CD4-positive, alpha-beta T cell (primary cell): ENCODE measurements at regions of chr3 and their contacts with region 1.

Region 1: DNA sequence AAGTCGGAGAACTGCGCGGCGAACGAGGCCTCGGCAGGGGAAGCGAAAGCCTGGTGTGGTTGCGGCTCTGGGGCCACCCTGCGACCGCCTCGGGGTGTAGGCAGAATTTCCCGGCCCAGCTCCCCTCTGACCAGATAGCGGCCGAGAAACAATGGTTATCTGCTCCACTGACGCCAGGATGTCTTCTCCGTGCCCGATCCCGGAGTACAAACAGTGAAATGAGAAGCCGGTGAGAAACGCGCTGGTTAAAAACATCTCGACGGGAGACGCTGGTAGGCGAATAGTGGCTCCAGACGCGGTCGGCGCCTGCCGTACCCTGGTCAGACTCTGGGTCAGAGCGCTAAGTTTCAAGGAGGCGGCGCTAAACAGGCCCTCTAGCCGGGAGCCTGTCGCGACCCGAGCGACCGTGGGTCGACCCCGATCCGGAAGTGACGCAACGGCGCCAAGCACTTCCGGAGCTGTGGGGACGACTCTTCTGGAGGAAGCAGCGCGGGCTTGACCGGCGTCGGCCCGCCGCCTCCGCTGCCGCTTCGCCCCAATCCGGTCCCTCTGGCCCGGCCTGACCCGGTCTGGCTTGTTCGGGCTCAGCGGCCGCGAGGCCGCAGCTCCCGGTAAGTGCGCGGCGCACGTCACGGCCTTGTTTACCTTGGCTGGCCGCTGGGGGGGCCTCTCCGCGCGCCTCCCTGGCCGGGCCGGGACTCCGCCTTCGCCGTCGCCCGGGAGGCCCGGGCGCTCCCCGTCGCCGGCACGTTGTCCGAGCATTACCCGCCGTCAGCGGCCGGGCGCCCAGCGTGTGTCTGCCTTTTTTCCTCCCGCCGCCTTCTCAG is at the start of gene ARIH2:
- DNase-seq: peak; percentile 74 to 95 (median 82)
- ATAC-seq: peak; percentile 73
- H3K4me3 ChIP-seq: peak within 1 kb of the TSS; percentile 99
- H3K4me3 Mint-ChIP-seq: peak within 1 kb of the TSS; percentile 94
- H3K27ac ChIP-seq: peak within 1 kb of the TSS; percentile 98 to 99
- H3K27ac Mint-ChIP-seq: peak within 1 kb of the TSS; percentile 99
- H3K4me1 ChIP-seq: peaks cover 37% of the 10 kb centered on the region
- H3K4me1 Mint-ChIP-seq: peaks cover 26% of the 10 kb centered on the region
- H3K27me3 ChIP-seq: no peaks in the 10 kb centered on the region
- H3K27me3 Mint-ChIP-seq: no peaks in the 10 kb centered on the region
- CTCF ChIP-seq: no peak
- total RNA-seq, gene ARIH2: 182 TPM

Region 2: DNA sequence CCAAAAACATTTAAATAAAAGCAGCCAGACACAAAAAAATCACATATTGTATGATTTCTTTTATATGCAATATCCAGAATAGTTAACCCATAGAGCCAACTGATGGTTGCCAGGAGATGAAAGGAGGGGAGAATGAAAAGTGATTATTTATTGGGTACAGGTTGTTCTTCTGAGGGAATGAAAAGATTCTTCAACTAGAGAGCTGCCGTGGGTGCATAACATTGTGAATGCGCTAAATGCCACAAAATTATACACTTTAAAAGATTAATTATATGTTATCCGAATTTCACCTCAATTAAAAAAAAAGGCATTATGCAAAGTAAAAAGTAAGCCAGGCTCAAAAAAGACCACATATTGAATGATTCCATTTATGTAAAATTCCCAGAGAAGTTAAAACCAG is 107.1 kb before region 1 on chr3:
- CTCF ChIA-PET with region 1: no interaction called
- POLR2A ChIA-PET with region 1: interaction called, 11 read pairs
- intact Hi-C with region 1: no loop called
- DNase-seq: no peak
- ATAC-seq: no peak
- H3K4me3 ChIP-seq: no peak overlapping the region
- H3K4me3 Mint-ChIP-seq: peak overlapping the region; percentile 9
- H3K27ac ChIP-seq: no peak overlapping the region
- H3K27ac Mint-ChIP-seq: peak overlapping the region; percentile 65
- H3K4me1 ChIP-seq: peaks cover 32% of the 10 kb centered on the region
- H3K4me1 Mint-ChIP-seq: peaks cover 40% of the 10 kb centered on the region
- H3K27me3 ChIP-seq: no peaks in the 10 kb centered on the region
- H3K27me3 Mint-ChIP-seq: no peaks in the 10 kb centered on the region
- CTCF ChIP-seq: no peak

Region 3: DNA sequence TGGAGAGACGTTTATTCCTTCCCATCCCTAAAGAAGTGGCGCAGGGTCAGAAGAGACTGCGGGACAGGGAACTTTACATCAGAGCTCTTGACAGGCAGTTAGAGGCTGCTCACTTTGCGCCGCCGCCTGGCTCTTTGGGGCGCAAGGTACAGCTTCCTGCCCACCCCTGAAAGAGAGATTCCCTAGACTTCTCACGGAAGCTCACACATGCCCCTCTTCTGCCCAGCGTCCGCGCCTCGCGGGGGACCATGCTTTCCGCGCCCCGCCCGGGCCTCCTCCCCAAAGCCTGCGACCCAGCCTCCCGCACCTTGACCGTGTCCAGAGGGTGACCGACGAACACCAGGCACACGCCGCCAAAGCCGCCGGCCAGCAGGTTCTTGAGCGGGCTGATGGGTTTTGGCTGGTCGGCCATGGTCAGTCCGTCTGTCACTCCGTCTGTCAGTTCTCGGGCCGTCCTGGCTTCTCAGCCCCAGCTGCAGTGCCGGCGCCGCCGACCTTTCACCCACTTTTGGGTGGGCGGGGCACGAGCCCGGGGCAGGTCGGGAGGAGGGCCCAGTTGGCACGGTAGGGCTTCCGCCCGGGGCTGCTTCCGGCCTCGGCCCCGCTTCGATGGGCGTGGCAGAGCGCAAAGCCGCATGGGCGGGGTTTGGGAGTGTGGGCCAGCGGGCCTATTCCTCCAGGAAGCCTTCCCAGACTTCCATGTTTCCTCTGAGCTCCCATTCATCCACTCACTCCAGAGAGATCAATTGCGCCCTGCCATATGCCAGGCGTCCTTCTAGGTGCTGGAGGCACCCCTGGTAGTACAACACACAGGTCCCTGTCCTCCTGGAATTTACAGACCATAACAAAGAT is 20.0 kb before region 1 on chr3 and contains the start of gene SLC25A20:
- CTCF ChIA-PET with region 1: interaction called, 21 read pairs
- POLR2A ChIA-PET with region 1: interaction called, 68 read pairs
- intact Hi-C with region 1: loop called (anchors 1 kb)
- DNase-seq: peak; percentile 75 to 93 (median 88)
- ATAC-seq: peak; percentile 97
- H3K4me3 ChIP-seq: peak within 1 kb of the TSS; percentile 92
- H3K4me3 Mint-ChIP-seq: peak within 1 kb of the TSS; percentile 95
- H3K27ac ChIP-seq: peak within 1 kb of the TSS; percentile 71 to 84
- H3K27ac Mint-ChIP-seq: peak within 1 kb of the TSS; percentile 78
- H3K4me1 ChIP-seq: peaks cover 47% of the 10 kb centered on the region
- H3K4me1 Mint-ChIP-seq: peaks cover 40% of the 10 kb centered on the region
- H3K27me3 ChIP-seq: no peaks in the 10 kb centered on the region
- H3K27me3 Mint-ChIP-seq: no peaks in the 10 kb centered on the region
- CTCF ChIP-seq: no peak
- total RNA-seq, gene SLC25A20: 0.41 to 0.78 TPM

Region 4: GRCh38 chr3:48966876-48967361 is 48.3 kb after region 1 on chr3:
- CTCF ChIA-PET with region 1: no interaction called
- POLR2A ChIA-PET with region 1: no interaction called
- intact Hi-C with region 1: no loop called
- DNase-seq: peak in 1 of 14 experiments; percentile 25
- ATAC-seq: no peak
- H3K4me3 ChIP-seq: no peak overlapping the region
- H3K4me3 Mint-ChIP-seq: no peak overlapping the region
- H3K27ac ChIP-seq: no peak overlapping the region
- H3K27ac Mint-ChIP-seq: peak overlapping the region; percentile 55
- H3K4me1 ChIP-seq: peaks cover 4% of the 10 kb centered on the region
- H3K4me1 Mint-ChIP-seq: peaks cover 13% of the 10 kb centered on the region
- H3K27me3 ChIP-seq: no peaks in the 10 kb centered on the region
- H3K27me3 Mint-ChIP-seq: no peaks in the 10 kb centered on the region
- CTCF ChIP-seq: no peak

Region 5: GRCh38 chr3:49007068-49007770 is 88.6 kb after region 1 on chr3 and contains the start of gene WDR6:
- CTCF ChIA-PET with region 1: interaction called, 4 read pairs
- POLR2A ChIA-PET with region 1: interaction called, 15 read pairs
- intact Hi-C with region 1: no loop called
- DNase-seq: peak; percentile 93 to 99 (median 96)
- ATAC-seq: peak; percentile 86
- H3K4me3 ChIP-seq: peak within 1 kb of the TSS; percentile 99
- H3K4me3 Mint-ChIP-seq: peak within 1 kb of the TSS; percentile 99
- H3K27ac ChIP-seq: peak within 1 kb of the TSS; percentile 89 to 99
- H3K27ac Mint-ChIP-seq: peak within 1 kb of the TSS; percentile 97
- H3K4me1 ChIP-seq: peaks cover 25% of the 10 kb centered on the region
- H3K4me1 Mint-ChIP-seq: peaks cover 27% of the 10 kb centered on the region
- H3K27me3 ChIP-seq: no peaks in the 10 kb centered on the region
- H3K27me3 Mint-ChIP-seq: no peaks in the 10 kb centered on the region
- CTCF ChIP-seq: peak; percentile 19
- total RNA-seq, gene WDR6: 132 to 134 TPM

Region 6: DNA sequence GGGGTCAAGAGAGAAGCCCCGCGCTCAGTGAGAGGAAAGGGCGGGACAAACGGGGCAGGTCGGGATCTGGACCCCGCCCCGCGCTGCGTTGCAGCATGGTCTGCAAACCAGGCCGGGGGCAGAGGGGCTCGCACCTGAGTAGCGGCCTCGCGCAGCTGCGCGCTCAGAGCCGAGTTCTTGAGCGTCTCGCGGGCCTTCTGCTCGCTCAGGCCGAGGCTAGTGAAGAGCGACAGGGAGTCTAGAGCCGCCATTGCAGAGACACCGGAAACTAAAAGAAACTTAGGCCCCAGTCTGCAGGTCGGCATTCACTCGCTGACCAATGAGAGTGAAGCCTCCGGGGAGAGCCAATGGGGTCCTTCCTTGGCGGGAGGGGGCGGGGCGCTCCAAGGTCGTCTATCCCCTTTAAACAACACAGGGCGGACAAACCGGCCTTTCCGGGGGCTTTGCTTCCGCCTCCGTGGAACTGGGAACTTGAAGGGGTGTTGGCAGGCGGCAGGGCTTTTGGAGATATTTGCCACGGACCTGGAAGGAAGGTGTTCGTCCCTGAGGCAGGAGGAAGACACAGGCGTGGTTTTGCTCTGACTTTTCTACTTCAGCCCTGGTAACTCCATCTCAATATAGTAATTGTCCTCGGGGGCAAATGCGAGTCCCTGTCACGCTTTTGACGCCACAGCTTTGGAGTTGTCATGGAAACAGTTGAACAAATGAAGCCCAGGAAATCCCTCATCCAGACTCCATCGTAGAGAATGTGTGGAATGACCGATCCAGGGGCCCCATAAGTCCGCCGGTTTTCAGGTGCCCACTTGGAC is 186.1 kb after region 1 on chr3 and contains the start of gene QARS1:
- CTCF ChIA-PET with region 1: no interaction called
- POLR2A ChIA-PET with region 1: no interaction called
- intact Hi-C with region 1: loop called in 1 of 2 experiments (anchors 5 kb)
- DNase-seq: peak; percentile 79 to 93 (median 85)
- ATAC-seq: peak; percentile 99
- H3K4me3 ChIP-seq: peak within 1 kb of the TSS; percentile 98
- H3K4me3 Mint-ChIP-seq: peak within 1 kb of the TSS; percentile 99
- H3K27ac ChIP-seq: peak within 1 kb of the TSS; percentile 71 to 78
- H3K27ac Mint-ChIP-seq: peak within 1 kb of the TSS; percentile 99
- H3K4me1 ChIP-seq: peaks cover 25% of the 10 kb centered on the region
- H3K4me1 Mint-ChIP-seq: peaks cover 31% of the 10 kb centered on the region
- H3K27me3 ChIP-seq: no peaks in the 10 kb centered on the region
- H3K27me3 Mint-ChIP-seq: no peaks in the 10 kb centered on the region
- CTCF ChIP-seq: no peak
- total RNA-seq, gene QARS1: 264 to 287 TPM